ENCODE measurements at regions of chr6 and their contacts with region 1.

Region 1: GRCh38 chr6:80605165-80605989 is 498.9 kb downstream of the BCKDHB start:
- DNase-seq: peak; percentile 57
- H3K4me3 ChIP-seq: no peak overlapping the region
- H3K27ac ChIP-seq: peak overlapping the region; percentile 12
- H3K4me1 ChIP-seq: peaks cover 26% of the 10 kb centered on the region
- H3K27me3 ChIP-seq: no peaks in the 10 kb centered on the region
- CTCF ChIP-seq: peak; percentile 52 to 63

Region 2: DNA sequence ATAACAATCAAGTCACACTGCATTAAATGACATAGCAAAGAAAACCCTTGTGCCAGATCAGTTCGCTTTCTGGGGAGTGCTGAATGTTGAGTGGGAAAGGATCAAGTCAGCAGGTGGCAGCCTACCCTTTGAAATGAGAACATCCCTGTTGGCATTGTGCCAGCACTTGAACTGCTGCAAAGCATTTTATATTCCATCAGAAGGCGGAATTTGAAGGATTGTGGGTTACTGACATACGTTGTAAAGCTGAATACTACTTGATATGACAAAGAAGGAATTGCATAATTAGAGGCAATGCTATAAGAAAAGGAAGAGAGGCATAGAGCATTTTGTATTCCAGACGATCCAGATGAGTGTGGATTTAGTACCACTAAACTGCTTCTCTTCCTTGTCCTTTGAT is 472.4 kb before region 1 on chr6:
- CTCF ChIA-PET with region 1: no interaction called
- dilution Hi-C with region 1: no loop called
- in situ Hi-C with region 1: no loop called
- intact Hi-C with region 1: loop called (anchors 10 kb)
- DNase-seq: peak; percentile 41
- H3K4me3 ChIP-seq: no peak overlapping the region
- H3K27ac ChIP-seq: no peak overlapping the region
- H3K4me1 ChIP-seq: peaks cover 9% of the 10 kb centered on the region
- H3K27me3 ChIP-seq: no peaks in the 10 kb centered on the region
- CTCF ChIP-seq: peak; percentile 64

Region 3: DNA sequence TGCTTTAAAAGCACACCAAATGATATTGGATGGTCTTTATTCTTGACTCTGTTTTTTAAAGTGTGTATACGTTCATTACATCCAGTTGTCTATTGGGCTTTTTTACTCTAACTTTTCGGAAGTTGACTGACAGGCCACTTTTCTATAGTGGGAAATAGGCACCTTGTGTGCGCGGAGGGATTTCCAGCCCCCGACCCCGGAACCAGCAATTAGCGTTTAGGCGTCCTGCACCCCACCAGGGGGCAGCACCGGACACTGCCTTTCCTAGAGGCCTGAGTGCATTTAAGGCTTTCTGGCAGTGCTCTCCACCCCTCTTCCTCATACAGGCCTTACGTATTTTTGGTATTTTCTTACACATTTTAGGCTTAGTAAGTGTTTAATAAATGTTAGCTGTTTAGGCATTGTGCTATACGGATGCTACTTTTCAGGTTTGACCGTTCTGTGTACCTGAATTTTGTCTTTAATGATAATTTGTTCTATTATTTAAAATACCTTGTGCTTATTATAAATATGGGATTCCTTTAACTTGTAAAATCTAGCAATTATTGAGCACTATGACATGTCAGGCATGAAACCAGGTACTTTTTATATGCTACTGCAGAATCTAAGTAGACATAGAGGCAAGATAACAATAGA is 267.1 kb before region 1 on chr6:
- CTCF ChIA-PET with region 1: no interaction called
- dilution Hi-C with region 1: no loop called
- in situ Hi-C with region 1: no loop called
- intact Hi-C with region 1: loop called (anchors 2 kb)
- DNase-seq: peak; percentile 29
- H3K4me3 ChIP-seq: no peak overlapping the region
- H3K27ac ChIP-seq: no peak overlapping the region
- H3K4me1 ChIP-seq: no peaks in the 10 kb centered on the region
- H3K27me3 ChIP-seq: no peaks in the 10 kb centered on the region
- CTCF ChIP-seq: peak; percentile 76 to 92

Region 4: DNA sequence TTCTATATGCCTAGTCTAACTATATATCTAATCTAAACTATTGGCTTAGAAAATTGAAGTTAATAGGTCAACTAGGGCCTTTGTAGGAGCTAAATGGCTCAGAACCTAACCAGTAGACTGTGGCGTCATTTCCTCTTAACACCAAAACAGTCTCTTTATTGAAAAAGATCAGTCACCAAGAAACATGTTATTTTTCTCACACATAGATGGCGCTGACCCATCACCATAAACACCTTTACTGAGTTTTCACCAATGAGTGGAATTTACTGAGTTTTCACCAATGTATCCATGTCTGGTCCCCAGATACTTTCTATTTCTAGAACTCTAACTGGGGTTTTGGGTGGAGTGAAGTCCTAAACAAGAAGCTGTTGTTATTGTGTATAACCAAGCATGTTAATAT is 137.1 kb after region 1 on chr6:
- CTCF ChIA-PET with region 1: no interaction called
- dilution Hi-C with region 1: no loop called
- in situ Hi-C with region 1: no loop called
- intact Hi-C with region 1: loop called (anchors 2 kb)
- DNase-seq: peak; percentile 19
- H3K4me3 ChIP-seq: no peak overlapping the region
- H3K27ac ChIP-seq: no peak overlapping the region
- H3K4me1 ChIP-seq: no peaks in the 10 kb centered on the region
- H3K27me3 ChIP-seq: no peaks in the 10 kb centered on the region
- CTCF ChIP-seq: peak; percentile 16 to 47

Region 5: GRCh38 chr6:82006027-82006738 is 1400.8 kb after region 1 on chr6:
- CTCF ChIA-PET with region 1: no interaction called
- dilution Hi-C with region 1: no loop called
- in situ Hi-C with region 1: loop called in 1 of 2 experiments (anchors 25 kb)
- intact Hi-C with region 1: no loop called
- DNase-seq: peak; percentile 41
- H3K4me3 ChIP-seq: no peak overlapping the region
- H3K27ac ChIP-seq: no peak overlapping the region
- H3K4me1 ChIP-seq: no peaks in the 10 kb centered on the region
- H3K27me3 ChIP-seq: no peaks in the 10 kb centered on the region
- CTCF ChIP-seq: peak; percentile 66 to 83

Measured in mammary epithelial cell (primary cell).